ENCODE measurements at regions of chr9 and their contacts with region 1.

Region 1: DNA sequence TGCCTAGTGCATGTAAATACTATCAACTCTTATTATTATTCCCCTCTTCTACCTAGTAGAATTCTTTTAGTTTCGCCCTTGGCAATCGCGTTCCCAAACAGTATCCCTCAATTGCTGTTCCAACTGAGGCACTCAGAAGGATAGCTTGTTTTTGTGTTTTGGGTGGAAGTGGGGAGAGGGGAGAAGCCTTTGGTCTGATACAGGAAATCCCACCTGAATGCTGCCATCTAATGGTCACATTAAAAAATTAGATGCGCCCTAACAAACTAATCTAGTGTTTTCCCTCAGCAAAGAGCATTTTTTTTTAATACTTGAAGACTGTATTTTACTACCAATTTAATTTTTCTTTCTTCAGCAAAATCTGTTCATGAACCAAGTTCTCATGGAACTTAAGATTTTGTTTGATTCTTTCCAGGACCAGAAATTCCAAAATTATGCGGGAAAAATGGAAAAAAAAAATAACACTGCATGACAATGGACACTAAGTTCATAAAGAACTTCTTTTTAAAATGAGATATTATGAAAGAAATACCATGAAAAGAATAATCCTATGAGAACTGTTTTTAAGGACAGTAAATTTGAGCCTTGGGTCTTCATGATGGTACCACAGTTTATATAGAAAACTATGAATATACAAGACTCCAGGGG is 22.2 kb upstream of the GLDC start:
- DNase-seq: no peak
- H3K4me3 ChIP-seq: no peak overlapping the region
- H3K27ac ChIP-seq: no peak overlapping the region
- H3K4me1 ChIP-seq: no peaks in the 10 kb centered on the region
- H3K27me3 ChIP-seq: no peaks in the 10 kb centered on the region
- CTCF ChIP-seq: peak; percentile 40 to 54 (median 48)
- POLR2A ChIP-seq: no peak

Region 2: GRCh38 chr9:6584881-6585597 is 82.7 kb before region 1 on chr9:
- intact Hi-C with region 1: loop called (anchors 5 to 10 kb)
- DNase-seq: no peak
- H3K4me3 ChIP-seq: no peak overlapping the region
- H3K27ac ChIP-seq: no peak overlapping the region
- H3K4me1 ChIP-seq: no peaks in the 10 kb centered on the region
- H3K27me3 ChIP-seq: no peaks in the 10 kb centered on the region
- CTCF ChIP-seq: peak; percentile 19 to 61 (median 48)
- POLR2A ChIP-seq: no peak

Region 3: DNA sequence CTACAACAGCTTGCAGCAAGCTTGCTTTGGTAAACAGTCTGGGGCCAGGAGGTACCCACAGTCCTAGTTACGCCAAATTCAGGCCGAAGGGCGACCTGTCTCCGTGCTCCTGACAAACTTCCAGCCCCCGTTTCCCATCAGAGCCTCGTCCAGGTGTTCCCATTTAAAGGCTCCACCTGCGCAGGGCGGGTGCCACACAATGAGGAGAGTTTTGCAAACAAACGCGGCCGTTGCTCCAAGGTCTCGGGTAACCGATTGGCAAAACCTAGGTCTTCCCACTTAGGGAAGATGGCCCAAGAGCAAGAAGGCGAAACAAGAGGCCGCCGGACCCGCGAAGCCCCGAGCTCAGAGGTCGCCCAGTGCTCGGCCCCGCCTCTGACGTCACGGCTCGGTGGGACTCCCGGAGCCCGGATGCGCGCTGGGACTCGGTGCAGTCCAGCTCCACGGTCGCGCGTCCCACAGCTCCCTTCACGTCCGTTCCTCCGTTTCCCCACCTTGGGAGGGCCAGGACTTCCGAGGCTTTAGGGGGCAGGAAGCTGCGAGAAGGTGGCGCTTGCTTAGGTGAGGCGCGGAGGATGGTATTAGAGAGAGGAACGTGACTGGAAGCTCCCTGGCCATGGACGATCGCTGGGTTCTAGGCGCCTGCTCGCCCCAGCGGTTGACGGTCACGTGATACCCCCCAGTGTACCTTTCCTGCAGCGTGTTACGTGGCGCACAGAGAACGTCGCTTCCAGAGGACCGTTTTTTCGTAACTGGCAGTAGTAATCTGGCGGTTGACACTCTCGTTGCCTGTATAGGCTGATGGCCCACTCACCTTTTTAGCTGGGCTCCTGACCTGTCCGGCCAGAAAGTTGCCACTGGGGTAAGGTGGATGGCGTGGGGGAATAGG is 48.2 kb after region 1 on chr9:
- intact Hi-C with region 1: no loop called
- DNase-seq: peak; percentile 32 to 73 (median 61)
- H3K4me3 ChIP-seq: peak overlapping the region in 2 of 4 donors; percentile 15 to 52
- H3K27ac ChIP-seq: peak overlapping the region in 1 of 5 donors; percentile 14
- H3K4me1 ChIP-seq: no peaks in the 10 kb centered on the region
- H3K27me3 ChIP-seq: no peaks in the 10 kb centered on the region
- CTCF ChIP-seq: no peak
- POLR2A ChIP-seq: no peak

Measured in adrenal gland (tissue), 19 donors.